Activated B cell treated with CpG ODN at 0.5 μM for 24 hours (primary cell): ENCODE measurements at regions of chr7 and their contacts with region 1.

Region 1: DNA sequence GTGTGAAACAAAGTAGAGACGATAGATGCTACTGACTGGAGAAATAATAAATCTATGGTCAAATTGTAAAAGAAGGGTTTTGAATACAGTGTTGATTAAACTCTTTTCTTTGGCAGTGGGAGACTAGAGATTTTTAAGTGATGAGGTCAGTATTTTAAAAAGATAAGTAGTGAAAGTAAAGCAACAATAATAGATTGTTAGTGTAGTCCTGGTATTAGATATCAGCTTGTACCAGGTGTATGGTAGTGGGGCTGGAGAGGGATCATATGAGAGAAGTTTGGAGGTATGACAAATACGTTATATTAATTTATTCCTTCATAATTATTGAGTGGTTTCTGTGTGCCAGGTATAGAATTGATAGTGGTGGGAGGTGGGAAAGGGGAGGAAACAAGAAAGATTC is 25.2 kb downstream of the PHTF2 start:
- DNase-seq: no peak
- ATAC-seq: peak; percentile 35
- H3K4me3 Mint-ChIP-seq: peak overlapping the region; percentile 83
- H3K27ac Mint-ChIP-seq: peak overlapping the region; percentile 97
- H3K4me1 Mint-ChIP-seq: peaks cover 81% of the 10 kb centered on the region
- H3K27me3 Mint-ChIP-seq: no peaks in the 10 kb centered on the region
- CTCF ChIP-seq: no peak

Region 2: DNA sequence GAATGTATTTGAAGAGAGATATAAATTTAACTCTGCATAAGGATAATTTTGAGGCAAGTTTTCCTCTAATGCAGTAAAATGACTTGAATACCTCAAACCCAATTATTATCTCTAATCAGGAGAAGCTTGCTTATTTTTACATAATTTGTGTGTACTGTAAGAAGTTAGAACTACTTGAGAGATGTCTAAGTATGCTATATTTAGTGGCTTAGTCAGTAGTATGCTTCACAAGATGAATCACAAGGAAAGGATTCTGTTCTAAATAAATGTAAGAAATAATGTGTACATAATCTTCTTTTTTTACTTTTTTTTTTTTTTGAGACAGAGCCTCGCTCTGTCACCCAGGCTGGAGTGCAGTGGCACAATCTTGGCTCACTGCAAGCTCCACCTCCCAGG is 11.5 kb before region 1 on chr7:
- CTCF ChIA-PET with region 1: no interaction called
- POLR2A ChIA-PET with region 1: interaction called, 16 read pairs
- intact Hi-C with region 1: loop called (anchors 1 kb)
- DNase-seq: no peak
- ATAC-seq: no peak
- H3K4me3 Mint-ChIP-seq: no peak overlapping the region
- H3K27ac Mint-ChIP-seq: peak overlapping the region; percentile 24
- H3K4me1 Mint-ChIP-seq: peaks cover 57% of the 10 kb centered on the region
- H3K27me3 Mint-ChIP-seq: no peaks in the 10 kb centered on the region
- CTCF ChIP-seq: no peak

Region 3: GRCh38 chr7:77837290-77837689 is 13.5 kb after region 1 on chr7:
- CTCF ChIA-PET with region 1: no interaction called
- POLR2A ChIA-PET with region 1: interaction called, 17 read pairs
- intact Hi-C with region 1: loop called (anchors 1 kb)
- DNase-seq: no peak
- ATAC-seq: no peak
- H3K4me3 Mint-ChIP-seq: no peak overlapping the region
- H3K27ac Mint-ChIP-seq: no peak overlapping the region
- H3K4me1 Mint-ChIP-seq: peaks cover 67% of the 10 kb centered on the region
- H3K27me3 Mint-ChIP-seq: no peaks in the 10 kb centered on the region
- CTCF ChIP-seq: no peak

Region 4: GRCh38 chr7:78095549-78095948 is 271.8 kb after region 1 on chr7:
- CTCF ChIA-PET with region 1: no interaction called
- POLR2A ChIA-PET with region 1: no interaction called
- intact Hi-C with region 1: no loop called
- DNase-seq: no peak
- ATAC-seq: no peak
- H3K4me3 Mint-ChIP-seq: no peak overlapping the region
- H3K27ac Mint-ChIP-seq: no peak overlapping the region
- H3K4me1 Mint-ChIP-seq: no peaks in the 10 kb centered on the region
- H3K27me3 Mint-ChIP-seq: peaks cover 22% of the 10 kb centered on the region
- CTCF ChIP-seq: no peak